ENCODE measurements at regions of chr12 and their contacts with region 1.

Region 1: DNA sequence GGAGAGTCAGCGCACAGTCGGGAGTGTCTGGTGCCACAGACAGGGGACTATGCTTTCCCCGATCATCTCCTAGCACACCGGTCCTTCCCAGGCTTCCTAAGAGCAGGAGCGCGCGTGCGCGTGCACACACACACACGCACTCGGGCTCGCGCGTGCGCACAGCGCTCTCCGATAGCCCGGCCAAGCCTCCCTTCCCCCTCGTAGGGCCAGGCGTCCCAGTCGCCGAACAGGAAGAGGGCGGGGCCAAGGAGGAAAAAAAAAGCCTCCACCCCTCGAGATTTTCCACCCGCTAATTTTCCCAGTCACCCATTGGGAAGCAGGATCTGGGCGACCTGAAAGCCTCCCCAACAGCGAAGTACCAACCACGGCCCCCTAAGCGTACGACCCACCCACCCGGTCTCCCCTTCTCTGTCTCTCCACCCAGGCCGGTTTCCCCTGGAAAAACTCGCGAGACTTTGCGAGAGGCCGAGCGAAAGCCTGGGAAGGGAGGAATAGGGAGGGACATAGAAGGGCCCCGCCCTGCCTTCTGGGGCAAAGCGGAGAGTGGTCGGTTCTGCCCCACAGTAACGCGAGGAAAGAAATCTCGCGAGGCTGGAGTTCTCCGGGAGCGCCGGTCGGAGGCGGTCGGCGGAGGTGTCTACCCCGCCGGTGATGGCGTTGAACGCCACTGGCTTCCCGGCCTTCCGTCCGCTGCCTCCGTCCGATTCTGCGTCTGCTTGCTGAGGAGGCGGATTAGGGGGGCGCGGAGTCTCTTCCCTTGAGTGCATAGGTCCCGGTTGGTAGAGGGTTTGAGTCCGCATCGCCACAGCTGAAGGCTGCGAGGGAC is at the starts of genes FGFR1OP2 and INTS13:
- DNase-seq: peak; percentile 93 to 99 (median 97)
- H3K4me3 ChIP-seq: peak within 1 kb of the TSS; percentile 68 to 99 (median 91)
- H3K27ac ChIP-seq: peak within 1 kb of the TSS; percentile 90 to 100 (median 98)
- H3K27me3 ChIP-seq: no peaks in the 10 kb centered on the region
- CTCF ChIP-seq: peak in 27 of 56 donors; percentile 8 to 43 (median 19)
- total RNA-seq, gene FGFR1OP2: 75.1 to 154 (median 111) TPM
- total RNA-seq, gene INTS13: 8.6 to 34.6 (median 16.3) TPM

Region 2: GRCh38 chr12:26832822-26833742 is 105.0 kb before region 1 on chr12 and contains the start of gene ITPR2:
- intact Hi-C with region 1: loop called in 1 of 2 experiments (anchors 2 kb)
- DNase-seq: peak; percentile 73 to 94 (median 86)
- H3K4me3 ChIP-seq: peak within 1 kb of the TSS; percentile 69 to 96 (median 86)
- H3K27ac ChIP-seq: peak within 1 kb of the TSS in 58 of 59 donors; percentile 42 to 99 (median 89)
- H3K27me3 ChIP-seq: no peaks in the 10 kb centered on the region
- CTCF ChIP-seq: peak in 31 of 56 donors; percentile 6 to 66 (median 32)
- total RNA-seq, gene ITPR2: 35.5 to 122 (median 61.5) TPM

Region 3: DNA sequence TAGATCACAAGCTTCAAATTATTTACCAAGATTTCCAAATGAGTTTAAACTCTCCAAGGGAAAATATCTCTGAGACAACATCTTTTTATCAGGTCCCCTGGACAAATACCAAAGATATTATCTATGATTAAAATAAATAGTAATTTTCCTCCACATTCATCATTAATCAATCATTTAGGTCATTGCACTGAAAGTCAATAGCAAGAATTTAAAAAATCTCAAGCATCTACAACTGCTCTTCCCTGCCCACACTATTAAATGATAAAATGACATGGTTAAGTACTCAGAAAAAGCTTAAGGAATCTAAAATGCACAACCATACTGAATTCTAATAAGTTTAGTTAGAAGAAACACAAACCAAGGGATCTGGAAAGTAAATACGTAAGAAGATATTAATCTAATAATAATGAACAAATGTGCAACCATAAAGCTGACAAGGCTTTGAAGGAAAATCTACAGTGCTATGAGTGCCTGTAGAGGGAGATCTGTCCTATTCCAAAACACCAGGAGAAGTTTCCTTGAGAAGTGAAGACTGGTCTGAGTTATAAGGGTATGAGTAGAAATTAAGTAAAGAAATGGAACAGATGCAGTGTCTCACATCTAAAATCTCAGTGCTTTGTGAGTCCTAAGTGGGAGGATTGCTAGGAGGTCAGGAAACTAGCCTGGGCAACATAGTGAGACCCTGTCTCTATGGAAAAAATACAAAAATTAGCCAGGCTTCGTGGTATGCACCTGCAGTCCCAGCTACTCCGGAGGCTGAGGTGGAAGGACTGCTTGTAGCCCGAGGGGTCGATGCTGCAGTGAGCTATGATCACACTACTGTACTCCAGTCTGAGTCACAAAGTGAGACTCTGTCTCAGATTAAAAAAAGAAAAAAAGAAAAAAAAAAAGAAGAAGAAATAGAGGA is 19.5 kb before region 1 on chr12:
- intact Hi-C with region 1: loop called in 1 of 2 experiments (anchors 2 kb)
- DNase-seq: no peak
- H3K4me3 ChIP-seq: peak overlapping the region in 29 of 59 donors; percentile 2 to 44 (median 21)
- H3K27ac ChIP-seq: peak overlapping the region in 58 of 59 donors; percentile 1 to 92 (median 72)
- H3K27me3 ChIP-seq: no peaks in the 10 kb centered on the region
- CTCF ChIP-seq: peak in 37 of 56 donors; percentile 10 to 58 (median 31)